CD8-positive, alpha-beta T cell (primary cell): ENCODE measurements at regions of chr9 and their contacts with region 1.

Region 1: GRCh38 chr9:129036241-129036922 is at the start of gene MIGA2:
- DNase-seq: peak; percentile 85 to 99 (median 94)
- ATAC-seq: peak; percentile 94
- H3K4me3 ChIP-seq: peak within 1 kb of the TSS; percentile 99
- H3K4me3 Mint-ChIP-seq: peak within 1 kb of the TSS; percentile 98
- H3K27ac ChIP-seq: peak within 1 kb of the TSS; percentile 68 to 83
- H3K27ac Mint-ChIP-seq: peak within 1 kb of the TSS; percentile 85
- H3K4me1 ChIP-seq: peaks cover 21% of the 10 kb centered on the region
- H3K4me1 Mint-ChIP-seq: peaks cover 36% of the 10 kb centered on the region
- H3K27me3 ChIP-seq: no peaks in the 10 kb centered on the region
- H3K27me3 Mint-ChIP-seq: no peaks in the 10 kb centered on the region
- CTCF ChIP-seq: no peak
- total RNA-seq, gene MIGA2: 63.5 to 69.0 TPM

Region 2: GRCh38 chr9:128159784-128160602 is 876.4 kb before region 1 on chr9 and contains the start of gene BBLN:
- CTCF ChIA-PET with region 1: no interaction called
- POLR2A ChIA-PET with region 1: no interaction called
- intact Hi-C with region 1: loop called in 1 of 2 experiments (anchors 1 kb)
- DNase-seq: peak; percentile 87 to 95 (median 93)
- ATAC-seq: peak; percentile 87
- H3K4me3 ChIP-seq: peak within 1 kb of the TSS; percentile 90 to 94
- H3K4me3 Mint-ChIP-seq: peak within 1 kb of the TSS; percentile 79
- H3K27ac ChIP-seq: peak within 1 kb of the TSS; percentile 70 to 86
- H3K27ac Mint-ChIP-seq: peak within 1 kb of the TSS; percentile 90
- H3K4me1 ChIP-seq: peaks cover 19% of the 10 kb centered on the region
- H3K4me1 Mint-ChIP-seq: peaks cover 17% of the 10 kb centered on the region
- H3K27me3 ChIP-seq: no peaks in the 10 kb centered on the region
- H3K27me3 Mint-ChIP-seq: no peaks in the 10 kb centered on the region
- CTCF ChIP-seq: no peak
- total RNA-seq, gene BBLN: 56.6 to 67.4 TPM

Region 3: GRCh38 chr9:128972956-128973355 is 63.4 kb before region 1 on chr9:
- CTCF ChIA-PET with region 1: no interaction called
- POLR2A ChIA-PET with region 1: no interaction called
- intact Hi-C with region 1: no loop called
- DNase-seq: no peak
- ATAC-seq: no peak
- H3K4me3 ChIP-seq: no peak overlapping the region
- H3K4me3 Mint-ChIP-seq: no peak overlapping the region
- H3K27ac ChIP-seq: no peak overlapping the region
- H3K27ac Mint-ChIP-seq: no peak overlapping the region
- H3K4me1 ChIP-seq: no peaks in the 10 kb centered on the region
- H3K4me1 Mint-ChIP-seq: no peaks in the 10 kb centered on the region
- H3K27me3 ChIP-seq: no peaks in the 10 kb centered on the region
- H3K27me3 Mint-ChIP-seq: no peaks in the 10 kb centered on the region
- CTCF ChIP-seq: no peak

Region 4: GRCh38 chr9:129068990-129069861 is 32.8 kb after region 1 on chr9:
- CTCF ChIA-PET with region 1: no interaction called
- POLR2A ChIA-PET with region 1: interaction called, 3 read pairs
- intact Hi-C with region 1: loop called (anchors 1 kb)
- DNase-seq: peak; percentile 22 to 82 (median 69)
- ATAC-seq: peak; percentile 90
- H3K4me3 ChIP-seq: peak overlapping the region; percentile 5 to 25
- H3K4me3 Mint-ChIP-seq: peak overlapping the region; percentile 68
- H3K27ac ChIP-seq: peak overlapping the region; percentile 34 to 66
- H3K27ac Mint-ChIP-seq: peak overlapping the region; percentile 92
- H3K4me1 ChIP-seq: peaks cover 45% of the 10 kb centered on the region
- H3K4me1 Mint-ChIP-seq: peaks cover 48% of the 10 kb centered on the region
- H3K27me3 ChIP-seq: no peaks in the 10 kb centered on the region
- H3K27me3 Mint-ChIP-seq: no peaks in the 10 kb centered on the region
- CTCF ChIP-seq: no peak